Breast epithelium (tissue), 4 donors: ENCODE measurements at regions of chr12 and their contacts with region 1.

Region 1: DNA sequence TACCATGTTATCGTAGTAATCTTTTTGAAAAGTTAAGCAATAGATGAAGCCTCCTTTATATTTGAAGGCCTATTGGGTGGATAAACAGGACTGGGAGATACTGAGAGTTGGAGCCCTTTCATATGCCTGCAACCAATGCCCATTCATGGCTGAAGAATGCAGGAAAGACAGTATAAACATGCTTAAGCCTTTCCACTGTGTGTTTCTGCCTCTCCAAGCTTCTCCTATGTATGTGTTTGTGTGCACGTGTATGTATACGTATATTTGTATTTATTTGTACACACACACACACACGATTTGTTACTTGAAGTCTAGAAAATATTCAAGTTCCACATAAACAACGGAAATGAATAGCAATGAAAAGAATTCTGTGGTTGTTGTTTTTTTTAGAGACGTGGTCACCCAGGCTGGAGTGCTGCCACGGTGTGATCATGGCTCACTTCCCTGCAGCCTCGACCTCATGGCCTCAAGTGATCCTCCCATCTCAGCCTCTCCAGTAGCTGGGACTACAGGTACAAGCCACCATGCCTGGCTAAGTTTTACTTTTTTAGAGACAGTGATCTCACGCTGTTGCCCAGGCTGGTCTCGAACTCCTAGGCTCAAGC is 1453.5 kb downstream of the AACS start:
- DNase-seq: no peak
- H3K4me3 ChIP-seq: no peak overlapping the region
- H3K27ac ChIP-seq: no peak overlapping the region
- H3K4me1 ChIP-seq: no peaks in the 10 kb centered on the region
- H3K27me3 ChIP-seq: no peaks in the 10 kb centered on the region
- CTCF ChIP-seq: no peak
- POLR2A ChIP-seq: no peak

Region 2: DNA sequence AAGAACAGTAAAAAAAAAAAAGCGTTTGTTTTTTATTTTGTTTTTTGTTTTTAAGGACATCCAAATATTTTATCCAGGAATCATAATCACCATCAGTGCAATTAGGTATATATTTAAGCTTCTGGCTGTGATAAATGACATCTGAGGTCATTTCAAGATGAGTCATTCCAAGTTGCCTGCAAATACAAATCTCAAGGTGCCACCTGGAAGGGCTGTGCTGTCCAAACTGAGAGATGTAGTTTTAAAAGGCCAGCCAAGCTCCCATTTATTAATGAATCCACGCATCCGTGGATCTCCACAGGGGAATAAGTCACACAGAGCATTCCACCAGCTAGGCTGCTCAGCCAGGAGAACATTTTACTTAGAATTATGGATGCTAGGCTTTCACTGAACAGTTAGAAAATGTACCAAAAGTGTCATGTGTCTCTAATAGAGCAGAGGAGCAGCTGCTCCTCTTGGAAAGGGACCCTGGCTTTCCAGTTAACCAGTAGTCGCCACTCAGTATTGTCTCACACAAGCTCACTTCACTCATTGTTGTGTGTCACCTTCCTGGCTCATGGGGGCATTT is 596.9 kb after region 1 on chr12:
- intact Hi-C with region 1: loop called (anchors 5 kb)
- DNase-seq: no peak
- H3K4me3 ChIP-seq: no peak overlapping the region
- H3K27ac ChIP-seq: no peak overlapping the region
- H3K4me1 ChIP-seq: no peaks in the 10 kb centered on the region
- H3K27me3 ChIP-seq: no peaks in the 10 kb centered on the region
- CTCF ChIP-seq: no peak
- POLR2A ChIP-seq: no peak